CD4-positive, alpha-beta T cell (primary cell): ENCODE measurements at regions of chr19 and their contacts with region 1.

Region 1: GRCh38 chr19:7919610-7920518 is at the start of gene SNAPC2:
- DNase-seq: peak; percentile 93 to 98 (median 96)
- ATAC-seq: peak; percentile 64
- H3K4me3 ChIP-seq: peak within 1 kb of the TSS; percentile 69
- H3K4me3 Mint-ChIP-seq: peak within 1 kb of the TSS; percentile 94
- H3K27ac ChIP-seq: peak within 1 kb of the TSS; percentile 78 to 79
- H3K27ac Mint-ChIP-seq: peak within 1 kb of the TSS; percentile 79
- H3K4me1 ChIP-seq: peaks cover 70% of the 10 kb centered on the region
- H3K4me1 Mint-ChIP-seq: peaks cover 37% of the 10 kb centered on the region
- H3K27me3 ChIP-seq: peaks cover 34 to 35% of the 10 kb centered on the region in 2 experiments
- H3K27me3 Mint-ChIP-seq: peaks cover 37% of the 10 kb centered on the region
- CTCF ChIP-seq: no peak
- total RNA-seq, gene SNAPC2: 9.9 to 10.9 TPM

Region 2: GRCh38 chr19:6292006-6292405 is 1627.9 kb before region 1 on chr19:
- CTCF ChIA-PET with region 1: no interaction called
- POLR2A ChIA-PET with region 1: no interaction called
- intact Hi-C with region 1: no loop called
- DNase-seq: no peak
- ATAC-seq: no peak
- H3K4me3 ChIP-seq: no peak overlapping the region
- H3K4me3 Mint-ChIP-seq: no peak overlapping the region
- H3K27ac ChIP-seq: no peak overlapping the region
- H3K27ac Mint-ChIP-seq: no peak overlapping the region
- H3K4me1 ChIP-seq: no peaks in the 10 kb centered on the region
- H3K4me1 Mint-ChIP-seq: no peaks in the 10 kb centered on the region
- H3K27me3 ChIP-seq: peaks cover 0 to 3% of the 10 kb centered on the region in 2 experiments
- H3K27me3 Mint-ChIP-seq: no peaks in the 10 kb centered on the region
- CTCF ChIP-seq: no peak

Region 3: GRCh38 chr19:7629347-7630054 is 290.4 kb before region 1 on chr19 and contains the starts of genes PET100 and XAB2:
- CTCF ChIA-PET with region 1: no interaction called
- POLR2A ChIA-PET with region 1: interaction called, 14 read pairs
- intact Hi-C with region 1: no loop called
- DNase-seq: peak; percentile 88 to 99 (median 94)
- ATAC-seq: peak; percentile 97
- H3K4me3 ChIP-seq: peak within 1 kb of the TSS; percentile 72
- H3K4me3 Mint-ChIP-seq: peak within 1 kb of the TSS; percentile 95
- H3K27ac ChIP-seq: peak within 1 kb of the TSS; percentile 92 to 94
- H3K27ac Mint-ChIP-seq: peak within 1 kb of the TSS; percentile 96
- H3K4me1 ChIP-seq: peaks cover 44% of the 10 kb centered on the region
- H3K4me1 Mint-ChIP-seq: peaks cover 34% of the 10 kb centered on the region
- H3K27me3 ChIP-seq: no peaks in the 10 kb centered on the region
- H3K27me3 Mint-ChIP-seq: no peaks in the 10 kb centered on the region
- CTCF ChIP-seq: no peak
- total RNA-seq, gene PET100: 178 to 188 TPM
- total RNA-seq, gene XAB2: 118 to 121 TPM

Region 4: GRCh38 chr19:7868676-7869452 is 51.0 kb before region 1 on chr19:
- CTCF ChIA-PET with region 1: interaction called, 43 read pairs
- POLR2A ChIA-PET with region 1: interaction called, 42 read pairs
- intact Hi-C with region 1: loop called (anchors 1 to 5 kb)
- DNase-seq: peak; percentile 69 to 96 (median 84)
- ATAC-seq: peak; percentile 69
- H3K4me3 ChIP-seq: peak overlapping the region; percentile 62
- H3K4me3 Mint-ChIP-seq: peak overlapping the region; percentile 87
- H3K27ac ChIP-seq: peak overlapping the region; percentile 67 to 72
- H3K27ac Mint-ChIP-seq: peak overlapping the region; percentile 80
- H3K4me1 ChIP-seq: peaks cover 70% of the 10 kb centered on the region
- H3K4me1 Mint-ChIP-seq: peaks cover 39% of the 10 kb centered on the region
- H3K27me3 ChIP-seq: peaks cover 20 to 21% of the 10 kb centered on the region in 2 experiments
- H3K27me3 Mint-ChIP-seq: peaks cover 33% of the 10 kb centered on the region
- CTCF ChIP-seq: peak; percentile 69

Region 5: DNA sequence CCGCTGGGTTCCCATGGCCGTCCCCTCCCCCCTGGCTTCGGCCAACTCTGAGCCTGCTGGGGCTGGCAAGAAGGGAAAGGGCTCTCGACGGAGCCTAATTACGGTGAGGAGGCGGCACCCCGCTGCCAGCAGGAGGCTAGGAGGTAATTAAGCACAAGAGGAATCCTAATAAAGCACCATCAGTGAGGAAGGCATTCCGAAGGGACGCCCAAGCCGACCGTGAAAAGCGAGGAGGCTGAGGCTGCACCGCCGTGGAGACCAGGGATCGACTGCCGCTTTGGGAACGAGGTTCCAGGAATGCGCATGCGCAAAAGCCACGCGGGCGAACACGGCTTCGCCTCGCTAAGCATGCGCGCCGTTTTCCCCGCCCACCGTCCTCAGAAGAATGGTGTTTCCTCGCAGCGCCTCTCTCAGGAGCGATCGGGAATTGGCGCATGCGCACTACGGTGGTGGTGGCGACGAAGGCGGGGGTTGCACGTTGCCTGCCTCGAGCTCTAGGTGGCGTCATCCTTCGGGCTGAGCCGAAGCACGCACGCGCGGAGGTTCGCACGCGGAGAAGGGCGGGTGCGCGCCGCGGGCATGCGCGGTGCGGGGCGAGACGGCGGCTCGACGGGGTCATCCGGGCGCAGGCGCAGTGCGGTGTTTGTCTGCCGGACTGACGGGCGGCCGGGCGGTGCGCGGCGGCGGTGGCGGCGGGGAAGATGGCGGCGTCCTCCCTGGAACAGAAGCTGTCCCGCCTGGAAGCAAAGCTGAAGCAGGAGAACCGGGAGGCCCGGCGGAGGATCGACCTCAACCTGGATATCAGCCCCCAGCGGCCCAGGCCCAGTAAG is 16.4 kb before region 1 on chr19 and contains the start of gene MAP2K7:
- CTCF ChIA-PET with region 1: interaction called, 22 read pairs
- POLR2A ChIA-PET with region 1: interaction called, 116 read pairs
- intact Hi-C with region 1: loop called in 1 of 2 experiments (anchors 1 kb)
- DNase-seq: peak; percentile 100
- ATAC-seq: peak; percentile 87
- H3K4me3 ChIP-seq: peak within 1 kb of the TSS; percentile 85
- H3K4me3 Mint-ChIP-seq: peak within 1 kb of the TSS; percentile 92
- H3K27ac ChIP-seq: peak within 1 kb of the TSS; percentile 68 to 87
- H3K27ac Mint-ChIP-seq: peak within 1 kb of the TSS; percentile 89
- H3K4me1 ChIP-seq: peaks cover 48% of the 10 kb centered on the region
- H3K4me1 Mint-ChIP-seq: peaks cover 26% of the 10 kb centered on the region
- H3K27me3 ChIP-seq: no peaks in the 10 kb centered on the region
- H3K27me3 Mint-ChIP-seq: peaks cover 6% of the 10 kb centered on the region
- CTCF ChIP-seq: peak; percentile 73
- total RNA-seq, gene MAP2K7: 81.7 to 82.3 TPM

Region 6: DNA sequence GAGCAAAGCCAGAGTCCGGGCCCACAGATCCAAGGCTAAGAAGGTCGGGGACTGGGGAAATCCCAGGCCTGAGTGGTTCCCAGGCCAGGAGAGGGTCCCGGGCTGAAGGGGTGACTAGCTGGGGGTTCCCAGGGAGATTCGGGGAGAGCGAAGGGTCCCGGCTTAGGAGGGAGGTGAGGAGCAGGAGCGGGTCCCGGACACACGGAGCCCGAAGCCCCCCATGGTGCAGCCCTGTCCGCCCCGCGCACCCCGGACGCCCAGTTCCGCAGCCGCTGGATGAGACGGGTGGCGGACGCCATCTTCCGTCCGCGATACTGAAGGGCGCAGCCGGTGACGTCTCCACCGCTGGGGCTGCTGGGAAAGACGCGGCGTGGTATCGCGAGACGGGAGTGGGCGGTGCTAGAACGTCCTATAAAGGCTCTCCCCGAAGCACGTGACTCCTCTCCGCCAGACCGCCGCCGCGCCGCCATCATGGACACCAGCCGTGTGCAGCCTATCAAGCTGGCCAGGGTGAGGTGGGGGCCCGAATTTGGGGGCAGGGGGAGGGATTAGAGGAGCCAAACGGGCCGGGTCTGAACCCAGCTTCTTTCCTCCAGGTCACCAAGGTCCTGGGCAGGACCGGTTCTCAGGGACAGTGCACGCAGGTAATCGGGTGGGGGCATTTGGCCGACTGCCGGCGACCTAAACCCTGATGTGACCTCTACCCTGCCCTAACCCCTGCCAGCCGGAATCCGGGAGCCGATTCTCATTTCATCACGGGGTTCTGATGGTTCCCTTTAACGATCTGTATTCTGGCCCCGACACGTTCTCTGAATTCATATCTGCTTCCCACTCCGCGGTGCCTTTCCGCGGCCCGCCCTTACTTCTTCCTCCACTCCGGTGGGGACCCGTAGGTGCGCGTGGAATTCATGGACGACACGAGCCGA is 401.5 kb after region 1 on chr19 and contains the starts of genes NDUFA7 and RPS28:
- CTCF ChIA-PET with region 1: no interaction called
- POLR2A ChIA-PET with region 1: no interaction called
- intact Hi-C with region 1: loop called in 1 of 2 experiments (anchors 10 kb)
- DNase-seq: peak; percentile 95 to 99 (median 98)
- ATAC-seq: peak; percentile 94
- H3K4me3 ChIP-seq: peak within 1 kb of the TSS; percentile 100
- H3K4me3 Mint-ChIP-seq: peak within 1 kb of the TSS; percentile 96
- H3K27ac ChIP-seq: peak within 1 kb of the TSS; percentile 85 to 96
- H3K27ac Mint-ChIP-seq: peak within 1 kb of the TSS; percentile 97
- H3K4me1 ChIP-seq: peaks cover 33% of the 10 kb centered on the region
- H3K4me1 Mint-ChIP-seq: peaks cover 41% of the 10 kb centered on the region
- H3K27me3 ChIP-seq: no peaks in the 10 kb centered on the region
- H3K27me3 Mint-ChIP-seq: no peaks in the 10 kb centered on the region
- CTCF ChIP-seq: peak; percentile 16
- total RNA-seq, gene NDUFA7: 42.0 to 42.7 TPM
- total RNA-seq, gene RPS28: 3,333 to 3,342 TPM

Region 7: DNA sequence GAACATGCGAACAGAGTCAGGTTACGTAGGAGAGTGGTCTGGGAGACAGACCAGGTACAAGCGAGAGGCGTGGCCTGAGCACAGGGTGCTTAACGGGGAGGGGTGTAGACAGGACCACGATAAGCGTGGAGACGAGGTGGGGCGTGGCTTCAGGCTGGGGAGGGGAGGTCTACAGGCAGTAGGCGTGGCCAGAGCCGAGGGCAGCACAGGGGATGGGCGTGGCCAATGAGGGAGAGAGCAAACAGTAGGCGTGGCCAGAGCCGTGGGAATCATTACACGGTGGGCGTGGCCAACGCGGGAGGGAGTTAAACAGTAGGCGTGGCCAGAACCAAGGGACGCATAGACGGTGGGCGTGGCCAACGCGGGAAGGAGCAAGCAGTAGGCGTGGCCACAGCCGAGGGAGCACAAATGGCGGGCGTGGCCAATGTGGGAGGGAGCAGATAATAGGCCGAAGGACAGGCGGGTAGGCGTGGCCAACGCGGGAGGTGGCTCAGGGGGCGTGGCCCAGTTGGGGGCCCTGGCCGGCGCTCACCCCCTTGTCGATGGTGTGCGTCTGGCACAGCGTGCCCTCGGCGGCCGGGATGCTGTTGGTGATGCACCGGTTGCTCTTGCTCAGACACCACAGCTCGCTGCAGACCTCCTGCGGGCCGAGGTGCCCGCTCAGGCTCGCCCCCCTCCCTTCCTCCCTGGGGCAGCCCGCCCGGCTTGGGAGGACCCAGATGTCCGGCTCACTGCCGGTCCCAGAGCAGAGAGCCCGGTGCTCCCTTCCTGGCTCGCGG is 672.6 kb after region 1 on chr19:
- CTCF ChIA-PET with region 1: no interaction called
- POLR2A ChIA-PET with region 1: no interaction called
- intact Hi-C with region 1: loop called in 1 of 2 experiments (anchors 5 kb)
- DNase-seq: peak; percentile 91 to 99 (median 95)
- ATAC-seq: peak; percentile 87
- H3K4me3 ChIP-seq: peak overlapping the region; percentile 58
- H3K4me3 Mint-ChIP-seq: peak overlapping the region; percentile 83
- H3K27ac ChIP-seq: no peak overlapping the region
- H3K27ac Mint-ChIP-seq: peak overlapping the region; percentile 63
- H3K4me1 ChIP-seq: peaks cover 20% of the 10 kb centered on the region
- H3K4me1 Mint-ChIP-seq: peaks cover 20% of the 10 kb centered on the region
- H3K27me3 ChIP-seq: no peaks in the 10 kb centered on the region
- H3K27me3 Mint-ChIP-seq: no peaks in the 10 kb centered on the region
- CTCF ChIP-seq: no peak